SK-N-SH (cell line): ENCODE measurements at regions of chr2 and their contacts with region 1.

Region 1: GRCh38 chr2:159118115-159118858 is 149.8 kb downstream of the TANC1 start:
- DNase-seq: peak; percentile 70
- H3K4me3 ChIP-seq: no peak overlapping the region; a peak in 1 of 4 replicates
- H3K27ac ChIP-seq: peak overlapping the region; percentile 41 to 69
- H3K4me1 ChIP-seq: peaks cover 6 to 25% of the 10 kb centered on the region in 2 experiments; a peak in 3 of 4 replicates
- H3K27me3 ChIP-seq: no peaks in the 10 kb centered on the region
- CTCF ChIP-seq: peak; percentile 86
- EP300 ChIP-seq: no peak
- RAD21 ChIP-seq: peak; percentile 98

Region 2: DNA sequence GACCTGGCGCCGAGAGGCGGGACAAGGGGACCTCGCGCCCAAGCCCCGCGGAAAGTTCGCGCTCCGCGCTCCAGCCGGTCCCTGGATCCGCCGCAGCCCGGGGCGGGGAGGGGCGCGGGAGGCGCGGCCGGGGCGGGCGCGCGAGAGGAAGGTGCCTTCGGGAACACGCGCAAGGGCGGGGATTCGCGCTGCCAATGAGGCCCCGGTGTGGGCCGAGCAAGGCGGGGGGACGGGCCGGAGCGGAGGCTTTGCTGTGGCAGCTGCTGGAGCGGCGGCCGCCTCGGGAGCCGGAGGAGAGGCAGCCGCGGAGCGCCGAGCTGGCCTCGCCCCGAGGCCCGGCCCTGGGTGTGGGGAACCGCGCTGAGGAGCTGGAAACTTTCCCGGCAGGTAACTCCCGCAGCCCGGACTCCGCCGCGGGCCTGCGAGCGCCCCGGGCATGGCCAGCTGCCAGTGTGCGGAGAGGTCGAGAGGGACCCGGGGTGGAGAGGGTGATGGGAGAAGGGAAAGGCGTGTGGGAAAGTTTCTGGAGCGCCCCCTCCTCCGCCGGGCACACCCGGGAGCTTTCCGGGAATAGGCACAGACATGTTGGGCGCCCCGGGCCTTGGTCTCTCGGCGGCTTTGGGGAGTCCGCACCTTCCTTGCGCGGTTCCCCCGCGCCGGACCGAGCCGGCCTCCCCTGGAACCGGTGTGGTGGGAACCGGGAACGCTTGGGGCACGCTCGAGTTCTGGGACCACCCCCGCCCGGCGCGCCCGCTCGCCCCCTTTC is 149.7 kb before region 1 on chr2 and contains the start of gene TANC1:
- CTCF ChIA-PET with region 1: interaction called, 23 read pairs
- POLR2A ChIA-PET with region 1: interaction called, 8 read pairs
- DNase-seq: peak; percentile 95
- H3K4me3 ChIP-seq: peak within 1 kb of the TSS; percentile 85 to 96
- H3K27ac ChIP-seq: peak within 1 kb of the TSS; percentile 97 to 99
- H3K4me1 ChIP-seq: peaks cover 11 to 49% of the 10 kb centered on the region in 2 experiments; a peak in 2 of 4 replicates
- H3K27me3 ChIP-seq: no peaks in the 10 kb centered on the region
- CTCF ChIP-seq: no peak; the same call in 1 of the 2 replicates
- EP300 ChIP-seq: peak in 1 of 2 experiments; percentile 13; a peak in 1 of 4 replicates
- RAD21 ChIP-seq: no peak; the same call in 1 of the 2 replicates
- polyA plus RNA-seq, gene TANC1: 19.2 and 23.8 TPM in 2 replicates

Region 3: DNA sequence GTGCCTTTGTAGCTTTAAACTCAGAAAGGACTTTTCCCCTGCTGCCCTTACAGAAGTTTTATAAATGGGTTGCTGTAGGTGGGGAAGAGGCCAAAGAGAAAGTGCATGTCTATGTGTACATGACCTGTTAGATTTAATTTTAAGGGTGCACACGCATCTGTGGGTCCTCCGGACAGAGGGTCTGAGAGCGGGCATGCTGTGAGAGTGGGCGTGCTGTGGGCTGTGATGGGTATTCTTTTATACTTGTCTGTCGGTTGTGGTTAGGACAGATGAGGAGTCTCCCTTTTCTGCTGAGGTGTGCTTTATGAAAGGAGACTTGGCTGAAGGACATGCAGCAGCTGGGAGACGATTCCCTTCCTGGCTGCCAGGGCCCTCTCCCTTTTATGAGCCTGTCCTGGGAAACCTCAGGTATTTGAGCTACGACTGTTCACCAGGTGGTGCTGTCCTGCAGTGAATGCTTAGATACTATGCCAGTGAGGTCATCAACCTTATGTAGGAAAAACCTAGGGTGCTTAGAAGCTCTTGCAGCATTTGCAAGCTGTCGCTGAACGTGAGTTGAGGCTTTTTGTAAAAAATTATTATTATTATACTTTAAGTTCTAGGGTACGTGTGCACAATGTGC is 82.4 kb before region 1 on chr2:
- CTCF ChIA-PET with region 1: interaction called, 33 read pairs
- POLR2A ChIA-PET with region 1: interaction called, 3 read pairs
- DNase-seq: peak; percentile 23
- H3K4me3 ChIP-seq: no peak overlapping the region
- H3K27ac ChIP-seq: no peak overlapping the region; a peak in 1 of 4 replicates
- H3K4me1 ChIP-seq: peaks cover 8 to 15% of the 10 kb centered on the region in 2 experiments; a peak in 3 of 4 replicates
- H3K27me3 ChIP-seq: no peaks in the 10 kb centered on the region
- CTCF ChIP-seq: peak; percentile 36; the same call in 1 of the 2 replicates
- EP300 ChIP-seq: no peak
- RAD21 ChIP-seq: peak; percentile 70

Region 4: DNA sequence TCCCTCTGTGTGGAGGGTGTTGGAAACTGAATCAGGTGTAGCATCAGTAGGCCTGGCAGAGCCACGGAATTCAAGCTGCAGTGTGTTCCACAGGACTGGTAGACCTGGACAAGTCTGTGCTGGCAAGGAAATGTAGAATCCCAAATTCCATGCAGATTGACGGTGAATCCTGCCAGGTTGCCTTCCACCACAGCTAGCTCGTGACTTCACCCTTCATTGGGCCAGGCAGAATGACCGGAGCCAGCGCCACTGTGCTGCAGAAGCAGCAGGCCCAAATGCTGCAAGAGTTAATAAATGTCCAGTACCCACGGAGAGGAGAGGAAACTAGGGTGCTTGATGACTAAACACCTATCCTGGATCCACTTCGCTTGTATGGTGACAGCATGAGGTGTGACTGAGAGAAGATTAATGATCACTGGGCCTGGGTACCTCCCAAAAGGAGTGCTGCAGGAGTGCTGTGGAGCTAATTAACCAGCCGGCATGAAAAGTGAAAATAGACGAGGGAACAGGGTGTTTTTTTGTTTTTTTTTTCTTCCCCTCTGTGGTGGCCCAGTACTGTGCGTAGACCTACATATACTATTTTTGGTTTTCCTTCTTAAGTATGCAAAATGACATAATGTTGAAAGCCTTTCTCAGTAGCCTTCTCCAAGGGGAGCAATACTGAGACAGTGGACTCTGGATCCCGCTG is 27.6 kb before region 1 on chr2:
- CTCF ChIA-PET with region 1: interaction called, 12 read pairs
- POLR2A ChIA-PET with region 1: no interaction called
- DNase-seq: no peak
- H3K4me3 ChIP-seq: no peak overlapping the region; a peak in 1 of 4 replicates
- H3K27ac ChIP-seq: peak overlapping the region; percentile 18 to 89; a peak in 3 of 4 replicates
- H3K4me1 ChIP-seq: peaks cover 27 to 30% of the 10 kb centered on the region in 2 experiments
- H3K27me3 ChIP-seq: no peaks in the 10 kb centered on the region
- CTCF ChIP-seq: no peak
- EP300 ChIP-seq: no peak
- RAD21 ChIP-seq: no peak